Head of caudate nucleus (tissue), 42 donors: ENCODE measurements at regions of chr7 and their contacts with region 1.

Region 1: DNA sequence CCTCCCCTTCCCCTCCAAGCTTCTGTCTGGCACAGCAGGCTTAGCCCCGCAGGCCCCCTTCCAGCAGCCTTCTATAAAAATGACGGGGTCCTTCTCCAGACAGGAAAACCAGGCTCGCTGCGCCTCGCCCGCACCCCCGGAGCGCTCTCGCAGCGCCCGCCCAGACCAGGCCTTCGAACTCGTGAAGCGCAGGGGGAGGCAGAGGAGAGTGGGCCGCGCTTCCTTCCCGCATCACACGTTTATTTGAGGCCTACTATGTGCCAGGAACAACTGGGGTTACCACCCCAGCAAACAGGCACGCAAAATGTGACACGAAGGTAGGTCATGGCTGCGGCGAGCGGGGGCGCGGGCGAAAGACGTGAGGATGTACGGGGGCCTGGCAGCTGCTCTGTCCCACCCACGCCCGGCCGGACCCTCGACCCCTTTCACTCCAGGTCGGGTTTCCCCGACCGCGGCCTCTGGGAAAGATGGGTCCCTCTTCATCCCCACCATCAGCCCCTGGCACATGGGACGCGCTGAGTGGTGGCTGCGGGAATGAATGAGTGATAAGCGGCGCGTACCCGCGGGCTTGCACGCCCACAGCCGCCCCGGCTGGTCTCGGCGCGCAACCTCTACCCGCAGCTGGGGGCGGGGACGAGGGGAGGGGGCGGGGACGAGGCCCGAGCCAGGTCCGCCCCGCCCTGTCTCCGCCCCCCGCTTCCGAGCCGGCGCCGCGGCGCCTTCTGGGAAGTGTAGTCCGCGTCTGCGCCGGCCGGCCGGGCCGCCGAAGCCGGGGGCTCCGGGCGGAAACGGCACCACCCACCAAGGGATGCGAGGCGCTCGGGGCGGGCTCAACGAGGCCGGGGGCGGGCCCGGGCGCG is 59.1 kb downstream of the ZNF467 start:
- DNase-seq: peak; percentile 62 to 96 (median 91)

Region 2: DNA sequence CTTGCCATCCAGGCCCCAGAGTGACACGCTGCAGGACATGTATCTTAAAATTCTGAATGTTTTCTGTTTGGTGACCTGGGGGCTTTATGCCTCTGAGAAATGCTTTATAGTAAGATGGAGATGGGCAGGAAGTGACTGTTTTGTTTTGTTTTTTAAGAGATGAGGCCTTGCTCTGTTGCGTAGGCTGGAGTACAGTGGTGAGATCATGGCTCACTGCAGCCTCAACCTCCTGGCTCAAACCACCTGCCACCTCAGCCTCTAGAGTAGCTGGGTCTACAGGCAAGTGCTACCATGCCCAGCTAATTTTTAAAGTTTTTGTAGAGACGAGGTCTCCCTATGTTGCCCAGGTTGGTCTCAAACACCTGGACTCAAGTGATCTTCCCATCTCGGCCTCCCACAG is 274.1 kb before region 1 on chr7:
- intact Hi-C with region 1: no loop called
- DNase-seq: no peak

Region 3: DNA sequence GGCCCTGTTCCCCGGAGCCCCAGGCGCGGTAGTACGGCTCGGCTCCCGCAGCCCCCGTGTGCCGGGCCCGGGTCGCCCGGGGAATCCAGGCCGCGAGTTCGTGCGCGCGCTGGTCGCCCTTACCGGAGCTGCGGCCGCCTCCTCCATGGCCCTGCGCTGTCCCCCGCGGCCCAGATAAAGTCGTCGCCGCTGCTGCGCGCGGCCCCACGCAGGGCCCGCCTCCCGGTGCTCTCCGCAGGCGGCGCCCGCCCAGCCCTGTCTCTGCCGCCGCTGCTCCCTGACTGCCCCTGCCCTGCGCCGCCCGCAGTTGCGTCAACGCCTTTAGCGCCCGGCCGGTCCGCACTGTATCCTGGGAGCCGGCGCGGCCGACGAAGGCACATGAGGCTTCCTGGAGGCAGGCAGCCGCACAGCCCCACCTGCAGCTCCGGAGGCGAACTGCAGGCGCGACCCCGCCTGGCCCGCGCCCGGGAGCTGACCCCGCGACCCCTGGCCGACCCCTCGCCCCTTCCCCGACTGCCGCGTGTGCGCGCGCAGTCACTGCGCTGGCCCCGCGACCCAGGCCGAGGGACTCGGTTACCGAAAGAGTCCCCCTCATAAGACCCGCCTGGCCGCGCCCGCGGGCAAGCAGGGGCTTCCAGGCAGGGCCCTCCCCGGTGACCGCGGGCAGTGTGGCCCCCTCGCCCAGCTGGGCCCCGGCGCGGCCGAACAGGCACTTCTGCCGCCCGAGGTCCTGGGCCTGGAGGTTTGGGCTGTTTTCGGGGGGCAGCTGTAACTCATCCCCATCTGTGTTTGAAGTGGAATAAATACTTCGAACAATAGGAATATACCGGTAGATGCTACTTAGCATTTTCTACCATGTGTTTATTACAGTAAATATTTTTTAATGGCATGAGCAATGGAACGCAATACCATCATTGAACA is 89.6 kb before region 1 on chr7:
- intact Hi-C with region 1: loop called (anchors 2 kb)
- DNase-seq: peak; percentile 80 to 97 (median 92)

Region 4: DNA sequence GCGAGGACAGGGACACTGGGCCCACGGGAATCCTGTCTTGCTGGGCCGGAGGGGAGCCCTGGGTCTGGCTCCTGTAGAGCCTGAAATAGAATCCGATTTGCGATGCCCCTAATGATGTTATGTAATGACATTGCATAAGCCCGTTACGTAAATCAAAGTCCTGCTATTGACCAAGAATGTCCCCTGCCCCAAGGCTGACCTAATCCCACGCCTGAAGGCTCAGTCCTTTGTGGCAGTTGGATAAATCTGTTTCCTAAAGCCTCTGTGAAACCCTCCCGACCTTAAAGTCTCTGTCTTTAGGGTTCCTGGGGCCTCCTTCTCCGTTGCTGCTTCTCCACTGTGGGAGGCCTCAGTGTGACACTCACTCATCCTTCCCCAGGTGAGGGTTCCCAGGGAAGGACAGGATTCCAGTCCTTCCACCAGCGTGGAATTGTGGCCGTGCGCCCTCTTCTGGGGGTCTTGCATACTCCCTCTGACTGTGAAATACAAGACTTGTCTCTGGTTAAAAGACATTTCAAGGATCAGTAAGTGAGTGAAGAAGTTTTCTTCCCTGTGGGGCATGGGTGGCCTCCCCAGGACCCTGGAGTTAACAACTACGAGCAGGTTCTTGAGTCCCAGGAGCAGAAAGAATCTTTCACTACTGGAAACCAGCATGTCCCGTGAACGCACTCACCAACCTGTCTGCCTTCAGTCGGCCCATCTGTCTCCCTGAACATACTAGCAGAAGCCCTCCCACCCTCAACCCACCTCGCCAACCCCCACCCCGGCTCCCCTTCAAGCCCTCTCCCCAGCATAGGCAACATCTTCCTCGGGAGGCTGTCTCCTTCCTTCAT is 39.3 kb after region 1 on chr7:
- intact Hi-C with region 1: no loop called
- DNase-seq: peak in 20 of 42 donors; percentile 17 to 74 (median 50)

Region 5: DNA sequence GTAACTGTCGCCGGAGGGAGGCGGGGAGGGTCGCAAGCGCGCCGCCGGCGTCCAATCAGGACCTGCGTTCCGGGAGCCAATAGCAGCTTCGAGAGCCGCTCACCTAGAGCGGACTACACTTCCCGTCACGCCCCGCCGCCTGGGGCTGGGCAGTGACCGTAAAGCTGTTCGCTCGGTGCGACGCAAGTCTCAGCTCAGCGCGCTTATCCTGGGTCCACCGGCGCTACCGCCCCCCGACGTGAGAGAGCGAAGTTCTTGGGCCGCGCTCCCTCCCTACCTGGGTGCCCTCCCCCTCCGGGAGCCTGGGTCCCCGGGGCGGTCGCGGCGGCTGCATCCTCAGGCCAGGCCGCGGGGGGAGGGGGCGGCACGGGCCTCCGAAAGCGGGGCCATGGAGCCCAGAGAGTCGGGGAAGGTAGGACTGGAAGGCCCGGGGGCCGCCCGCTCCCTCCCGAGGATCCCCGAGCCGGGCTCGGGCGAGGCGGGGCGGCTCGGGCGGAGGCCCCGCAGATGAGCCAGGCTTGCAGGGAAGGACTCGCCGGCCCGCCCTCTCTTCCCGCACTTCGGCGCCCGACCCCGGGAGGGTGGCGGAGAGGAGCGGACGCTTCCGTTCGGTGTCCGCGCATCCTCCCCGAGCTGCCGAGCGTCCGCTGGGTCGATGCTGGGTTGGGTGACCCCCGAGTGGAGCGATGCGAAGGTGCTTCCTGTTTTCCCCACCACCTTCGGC is 124.1 kb after region 1 on chr7 and contains the start of gene ZNF862:
- intact Hi-C with region 1: loop called (anchors 5 kb)
- DNase-seq: peak; percentile 98 to 100 (median 99)

Region 6: DNA sequence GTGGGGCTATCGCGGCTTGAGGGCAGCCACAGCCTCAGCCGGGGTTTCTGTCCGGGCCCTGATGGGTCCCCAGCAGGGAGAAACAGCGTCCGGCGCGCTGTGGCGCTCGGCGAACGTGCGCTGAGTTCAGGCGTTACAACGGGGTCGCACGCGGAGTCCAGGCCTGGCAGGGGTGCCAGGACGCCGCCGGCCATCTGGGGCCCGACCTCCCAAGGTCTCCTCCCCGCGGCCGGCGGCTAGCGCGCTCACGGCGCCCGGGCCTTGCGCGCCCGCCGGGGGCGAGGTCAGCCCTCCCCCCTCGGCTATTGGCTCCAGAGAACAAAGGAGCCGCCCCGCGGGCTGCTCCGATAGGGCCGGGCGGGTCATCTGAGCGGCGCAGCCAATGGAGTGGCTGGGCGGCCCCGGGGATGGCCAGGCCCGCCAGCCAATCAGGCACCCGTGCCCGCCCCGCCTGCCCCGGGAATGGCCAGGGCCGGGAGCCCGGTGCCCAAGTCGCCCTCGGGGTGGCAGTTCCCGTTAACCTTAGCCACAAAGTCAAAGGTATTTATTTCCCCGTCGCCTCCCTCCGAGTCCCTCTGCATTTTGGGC is 664.7 kb after region 1 on chr7 and contains the start of gene ZNF775:
- intact Hi-C with region 1: loop called (anchors 10 kb)
- DNase-seq: peak; percentile 88 to 98 (median 96)